ENCODE measurements at regions of chr20 and their contacts with region 1.

Region 1: GRCh38 chr20:5818346-5818681 is 68.1 kb downstream of the SHLD1 start:
- DNase-seq: no peak
- H3K4me3 ChIP-seq: no peak overlapping the region
- CTCF ChIP-seq: no peak
- POLR2A ChIP-seq: no peak

Region 2: GRCh38 chr20:5586720-5587119 is 231.6 kb before region 1 on chr20:
- intact Hi-C with region 1: no loop called
- DNase-seq: no peak
- H3K4me3 ChIP-seq: no peak overlapping the region
- CTCF ChIP-seq: no peak
- POLR2A ChIP-seq: no peak

Region 3: DNA sequence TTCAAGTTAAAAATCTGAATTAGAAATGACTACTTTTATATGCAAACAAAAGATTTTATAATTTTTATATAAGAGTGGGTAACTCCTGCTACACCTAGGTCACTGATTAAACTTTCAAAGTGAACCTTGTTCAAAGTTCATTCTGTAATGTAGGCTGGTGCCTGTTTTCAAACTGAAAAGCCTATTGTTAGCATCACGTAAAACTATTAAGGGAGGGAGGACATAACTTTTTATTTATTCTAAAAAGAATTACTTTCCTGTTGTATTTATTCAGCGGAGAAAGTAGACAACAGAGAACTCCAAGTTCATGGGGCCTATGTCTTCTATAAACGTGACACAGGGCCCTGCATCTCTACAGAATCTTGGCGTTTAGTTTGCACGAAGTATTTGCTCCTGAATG is 277.1 kb after region 1 on chr20:
- intact Hi-C with region 1: loop called (anchors 5 kb)
- DNase-seq: no peak
- H3K4me3 ChIP-seq: no peak overlapping the region
- CTCF ChIP-seq: no peak
- POLR2A ChIP-seq: no peak

Measured in lower leg skin (tissue), 4 donors.